Right ventricle myocardium superior (tissue), 1 donor: ENCODE measurements at regions of chr7 and their contacts with region 1.

Region 1: GRCh38 chr7:139359366-139360209 is at the start of gene LUC7L2:
- DNase-seq: peak; percentile 100
- ATAC-seq: peak; percentile 97
- total RNA-seq, gene LUC7L2: 45.2 TPM

Region 2: DNA sequence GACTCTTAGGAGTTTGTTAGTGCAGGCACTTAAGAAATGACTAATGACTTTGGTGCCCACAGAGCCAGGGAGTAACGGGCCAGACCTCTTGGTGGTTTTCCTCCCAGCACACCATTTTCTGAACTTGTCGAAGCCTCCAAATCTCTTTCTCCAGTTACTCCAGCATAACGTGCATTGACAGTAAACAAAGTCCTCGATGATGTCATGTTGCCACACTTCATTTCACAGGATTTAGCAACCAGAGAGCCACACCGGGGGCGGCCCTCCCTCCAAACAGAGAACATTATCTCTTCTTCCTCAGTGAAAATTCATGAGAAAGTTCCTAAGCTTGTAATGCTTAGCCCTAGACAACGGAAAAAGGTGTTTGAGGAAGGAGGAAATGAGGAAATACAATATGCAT is 654.4 kb before region 1 on chr7:
- intact Hi-C with region 1: no loop called
- DNase-seq: no peak
- ATAC-seq: no peak

Region 3: DNA sequence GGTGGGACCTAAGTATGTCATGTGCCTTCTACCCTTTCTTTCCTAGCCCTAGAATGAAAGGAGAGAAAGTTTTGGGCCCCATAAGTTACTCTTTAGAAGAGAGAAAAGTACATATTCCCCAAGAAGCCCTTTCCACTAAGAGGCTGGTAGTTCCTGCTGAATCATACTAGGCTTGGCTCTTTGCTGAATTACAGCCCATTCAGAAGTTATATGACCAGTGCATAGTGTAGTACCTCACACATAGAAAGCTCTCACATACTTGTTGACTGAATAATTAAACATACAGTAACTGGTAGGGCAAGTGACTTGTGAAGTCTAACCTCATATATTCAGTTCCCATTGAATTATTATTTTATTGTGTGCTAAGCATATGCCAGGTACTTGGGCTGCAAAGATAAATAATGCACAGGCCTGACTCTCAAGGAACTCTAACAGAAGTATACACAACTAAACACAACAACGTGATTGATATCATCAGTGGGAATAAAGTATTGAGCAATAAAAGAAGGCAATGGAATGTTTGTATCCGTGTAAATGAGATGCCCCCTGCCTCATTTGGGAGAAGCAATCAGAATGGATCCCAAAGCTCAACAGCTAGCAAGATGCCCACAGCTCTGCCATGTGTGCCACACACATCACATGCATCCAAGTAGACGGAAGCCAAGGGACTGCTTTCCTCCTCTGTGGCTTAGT is 167.4 kb before region 1 on chr7:
- intact Hi-C with region 1: no loop called
- DNase-seq: no peak
- ATAC-seq: no peak

Region 4: DNA sequence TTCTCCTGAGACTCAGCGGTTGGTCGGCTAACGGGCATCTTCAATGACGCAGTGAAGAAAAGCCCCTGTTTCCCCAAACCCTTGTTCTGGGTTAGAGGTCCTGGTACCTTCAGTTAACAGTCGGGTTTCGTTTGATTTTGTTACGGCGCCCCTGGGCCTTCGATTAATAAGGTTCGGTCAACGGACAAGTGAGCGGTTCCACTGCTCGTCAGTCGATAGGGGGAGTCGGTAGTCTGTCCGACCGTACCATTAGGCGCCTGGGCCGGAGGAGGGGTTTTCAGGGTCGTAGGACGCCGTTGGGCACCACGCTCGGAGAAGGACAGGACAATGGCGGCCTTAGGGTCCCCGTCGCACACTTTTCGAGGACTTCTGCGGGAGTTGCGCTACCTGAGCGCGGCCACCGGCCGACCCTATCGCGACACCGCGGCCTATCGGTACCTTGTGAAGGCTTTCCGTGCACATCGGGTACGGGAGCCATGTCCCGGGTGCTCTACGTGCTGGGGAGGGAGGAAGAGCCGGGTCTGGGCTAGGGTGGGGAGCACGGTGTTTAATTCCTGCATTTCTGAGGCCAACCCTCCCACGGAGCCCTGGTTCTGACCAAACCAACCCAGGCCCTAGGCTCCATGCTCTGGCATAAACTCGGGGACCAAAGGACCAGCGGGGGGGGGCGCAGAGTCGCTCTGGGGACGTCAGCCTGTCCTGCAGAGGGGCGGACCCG is 18.4 kb before region 1 on chr7 and contains the start of gene FMC1:
- intact Hi-C with region 1: loop called (anchors 1 kb)
- DNase-seq: peak; percentile 94
- ATAC-seq: peak; percentile 87
- total RNA-seq, gene FMC1: 55.3 TPM

Region 5: DNA sequence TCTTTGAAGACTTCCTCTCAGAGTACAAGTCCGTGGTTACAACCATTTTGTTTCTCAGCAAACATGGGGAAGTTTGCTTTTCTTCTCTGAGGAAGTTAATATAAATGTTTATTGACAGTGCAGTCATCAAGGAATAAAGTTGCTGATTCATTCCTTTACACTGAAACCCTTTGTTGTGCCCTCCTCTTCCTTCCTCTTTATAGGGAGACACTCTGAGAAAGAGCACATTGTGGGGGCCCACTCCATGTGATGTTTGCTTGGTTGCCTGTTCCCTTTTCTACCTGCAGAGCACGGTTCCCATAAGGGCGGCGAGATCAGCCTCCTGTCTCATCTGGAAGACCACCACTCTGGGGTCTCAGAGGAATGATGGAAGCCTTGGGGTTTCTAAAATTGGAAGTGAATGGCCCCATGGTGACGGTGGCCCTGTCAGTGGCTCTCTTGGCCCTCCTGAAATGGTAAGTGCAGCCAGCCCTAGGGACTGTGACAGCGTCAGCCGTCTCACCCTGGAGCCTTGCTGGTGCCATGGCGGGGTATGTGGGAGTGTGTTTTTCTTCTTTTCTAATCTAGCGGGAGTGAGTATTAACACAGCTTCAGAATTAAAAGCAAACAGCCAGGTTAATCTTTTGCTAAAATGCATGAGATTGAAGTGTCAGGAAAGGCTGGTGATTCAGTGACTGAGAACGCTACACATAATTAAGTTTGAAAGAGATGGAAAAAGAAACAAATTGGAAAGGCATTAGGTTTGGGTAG is 469.6 kb after region 1 on chr7 and contains the start of gene TBXAS1:
- intact Hi-C with region 1: no loop called
- DNase-seq: no peak
- ATAC-seq: peak; percentile 83
- total RNA-seq, gene TBXAS1: 4.2 TPM